MCF 10A (cell line): ENCODE measurements at regions of chr1 and their contacts with region 1.

Region 1: GRCh38 chr1:119987112-119987511 is 82.3 kb downstream of the NOTCH2 start:
- DNase-seq: peak; percentile 86
- H3K4me3 Mint-ChIP-seq: peak overlapping the region; percentile 4
- H3K27ac Mint-ChIP-seq: peak overlapping the region; percentile 91
- H3K4me1 Mint-ChIP-seq: peaks cover 44% of the 10 kb centered on the region
- H3K27me3 Mint-ChIP-seq: no peaks in the 10 kb centered on the region
- CTCF ChIP-seq: no peak

Region 2: GRCh38 chr1:119968068-119968492 is 19.0 kb before region 1 on chr1:
- CTCF ChIA-PET with region 1: interaction called, 11 read pairs
- POLR2A ChIA-PET with region 1: no interaction called
- intact Hi-C with region 1: no loop called
- DNase-seq: peak; percentile 67
- H3K4me3 Mint-ChIP-seq: no peak overlapping the region
- H3K27ac Mint-ChIP-seq: peak overlapping the region; percentile 92
- H3K4me1 Mint-ChIP-seq: peaks cover 14% of the 10 kb centered on the region
- H3K27me3 Mint-ChIP-seq: no peaks in the 10 kb centered on the region
- CTCF ChIP-seq: peak; percentile 73

Region 3: GRCh38 chr1:119974013-119974412 is 13.1 kb before region 1 on chr1:
- CTCF ChIA-PET with region 1: interaction called, 11 read pairs
- POLR2A ChIA-PET with region 1: interaction called, 26 read pairs
- intact Hi-C with region 1: no loop called
- DNase-seq: peak; percentile 54
- H3K4me3 Mint-ChIP-seq: no peak overlapping the region
- H3K27ac Mint-ChIP-seq: peak overlapping the region; percentile 6
- H3K4me1 Mint-ChIP-seq: peaks cover 36% of the 10 kb centered on the region
- H3K27me3 Mint-ChIP-seq: no peaks in the 10 kb centered on the region
- CTCF ChIP-seq: no peak